Transverse colon (tissue), 4 donors: ENCODE measurements at regions of chr16 and their contacts with region 1.

Region 1: DNA sequence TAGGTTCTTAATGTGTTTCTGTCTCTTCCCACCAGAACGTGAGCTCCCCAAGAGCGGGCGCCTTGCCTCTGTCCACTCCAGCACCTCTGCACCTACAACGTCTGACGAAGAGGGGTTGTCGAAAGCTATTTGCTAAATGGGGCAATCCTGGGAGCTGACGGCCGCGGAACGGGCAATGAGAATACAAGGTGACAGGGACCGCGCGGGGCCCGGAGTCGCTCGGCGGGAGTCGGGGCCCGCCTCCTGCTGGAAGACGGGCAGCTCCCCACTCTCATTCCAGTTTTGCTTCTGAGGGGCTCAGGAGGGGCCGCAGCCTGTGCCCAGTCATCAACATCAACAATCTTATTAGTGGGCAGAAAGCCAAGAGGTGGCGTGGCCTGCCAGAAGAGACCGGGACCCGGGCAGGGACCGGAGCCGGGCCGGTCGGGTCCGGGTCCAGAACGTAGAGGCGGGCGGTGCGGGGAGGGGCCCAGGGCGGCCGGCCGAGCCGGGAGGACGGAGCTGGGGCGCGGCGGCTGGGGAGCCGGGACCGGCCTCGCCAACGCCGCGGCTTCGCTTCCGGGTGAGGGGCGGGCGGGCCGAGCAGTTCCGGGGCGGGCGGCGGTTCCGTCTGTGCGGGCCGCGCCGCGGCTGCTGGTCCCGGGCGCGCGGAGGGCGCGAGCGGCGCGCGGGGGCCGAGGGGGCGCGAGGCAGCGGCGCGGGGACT is at the start of gene MOSMO:
- DNase-seq: peak; percentile 79
- H3K4me3 ChIP-seq: peak within 1 kb of the TSS; percentile 87 to 99 (median 98)
- H3K27ac ChIP-seq: peak within 1 kb of the TSS; percentile 89 to 94 (median 91)
- H3K4me1 ChIP-seq: peaks cover 7 to 40% (median 25%) of the 10 kb centered on the region in 4 donors
- H3K27me3 ChIP-seq: no peaks in the 10 kb centered on the region
- CTCF ChIP-seq: peak in 4 of 5 experiments; percentile 11 to 19 (median 14)
- EP300 ChIP-seq: no peak
- POLR2A ChIP-seq: peak; percentile 33
- total RNA-seq, gene MOSMO: 8.4 to 68.5 (median 17.2) TPM

Region 2: GRCh38 chr16:22063888-22064467 is 56.3 kb after region 1 on chr16:
- in situ Hi-C with region 1: loop called in 1 of 4 experiments (anchors 10 kb)
- intact Hi-C with region 1: no loop called
- DNase-seq: no peak
- H3K4me3 ChIP-seq: no peak overlapping the region
- H3K27ac ChIP-seq: no peak overlapping the region
- H3K4me1 ChIP-seq: no peaks in the 10 kb centered on the region
- H3K27me3 ChIP-seq: no peaks in the 10 kb centered on the region
- CTCF ChIP-seq: no peak
- EP300 ChIP-seq: no peak
- POLR2A ChIP-seq: no peak